Heart right ventricle (tissue), 16 donors: ENCODE measurements at regions of chr18 and their contacts with region 1.

Region 1: GRCh38 chr18:46821856-46822711 is 65.2 kb upstream of the ST8SIA5 start:
- DNase-seq: no peak
- ATAC-seq: no peak
- H3K4me3 ChIP-seq: no peak overlapping the region
- H3K27ac ChIP-seq: no peak overlapping the region
- H3K4me1 ChIP-seq: no peaks in the 10 kb centered on the region
- H3K27me3 ChIP-seq: no peaks in the 10 kb centered on the region
- CTCF ChIP-seq: no peak

Region 2: DNA sequence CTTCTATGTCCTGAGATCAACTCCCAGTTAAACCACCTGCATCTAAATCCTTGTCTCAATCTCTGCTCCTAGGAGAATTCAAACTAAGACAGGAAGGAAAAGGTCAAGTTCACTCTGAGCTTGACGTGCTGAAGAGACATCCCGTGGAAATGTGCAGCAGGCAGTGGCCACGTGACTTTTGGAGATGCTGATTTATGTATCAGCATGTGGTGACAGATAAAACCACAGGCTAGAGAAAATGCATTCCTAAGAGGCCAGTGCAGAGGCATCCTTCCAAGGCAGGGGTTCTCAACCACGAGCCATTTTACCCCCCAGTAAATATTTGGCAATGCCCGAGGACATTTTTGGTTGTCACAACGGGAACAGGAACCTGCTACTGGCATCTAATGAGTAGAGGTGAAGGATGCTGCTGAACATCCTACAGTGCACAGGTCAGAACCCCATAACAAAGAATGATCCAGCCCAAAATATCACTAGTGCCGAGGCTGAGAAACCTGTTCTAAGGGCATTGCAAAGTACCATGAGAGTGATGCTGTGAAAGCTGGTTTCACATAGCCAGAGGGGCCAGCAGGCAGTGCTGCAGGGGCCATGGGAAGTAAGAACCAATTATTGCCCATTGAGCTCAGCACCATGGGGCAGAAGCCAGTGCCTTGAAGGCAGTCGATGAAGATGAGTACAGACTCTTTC is 543.5 kb before region 1 on chr18:
- intact Hi-C with region 1: no loop called
- DNase-seq: no peak
- ATAC-seq: peak in 4 of 8 donors; percentile 23 to 50 (median 40)
- H3K4me3 ChIP-seq: no peak overlapping the region
- H3K27ac ChIP-seq: no peak overlapping the region
- H3K4me1 ChIP-seq: peaks cover 0 to 24% (median 17%) of the 10 kb centered on the region in 9 donors
- H3K27me3 ChIP-seq: no peaks in the 10 kb centered on the region
- CTCF ChIP-seq: no peak

Region 3: GRCh38 chr18:46411867-46412690 is 410.0 kb before region 1 on chr18:
- intact Hi-C with region 1: no loop called
- DNase-seq: peak; percentile 40 to 63
- ATAC-seq: peak; percentile 68 to 88 (median 82)
- H3K4me3 ChIP-seq: peak overlapping the region in 1 of 10 donors; percentile 9
- H3K27ac ChIP-seq: peak overlapping the region; percentile 61 to 94 (median 86)
- H3K4me1 ChIP-seq: peaks cover 5 to 90% (median 55%) of the 10 kb centered on the region in 9 donors
- H3K27me3 ChIP-seq: no peaks in the 10 kb centered on the region
- CTCF ChIP-seq: no peak

Region 4: DNA sequence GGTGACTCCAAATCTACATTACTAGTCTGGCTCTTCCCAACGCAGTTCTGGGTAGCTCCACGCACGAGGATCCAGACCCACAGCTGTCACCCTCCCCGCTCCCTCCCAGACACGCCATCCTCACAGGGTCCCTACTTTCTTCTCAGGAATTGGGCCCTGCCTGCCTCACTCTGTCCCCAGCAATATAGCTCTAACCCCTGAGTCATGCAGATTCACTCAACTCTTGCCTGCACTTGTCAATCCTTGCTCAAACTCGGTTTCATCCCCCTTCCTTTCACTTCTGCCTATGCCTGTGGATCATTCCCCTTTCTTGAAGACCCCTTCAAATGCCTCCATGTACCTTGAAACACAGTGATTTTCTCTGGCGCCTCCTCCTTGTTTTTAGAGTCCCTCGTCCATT is 70.2 kb before region 1 on chr18:
- intact Hi-C with region 1: no loop called
- DNase-seq: no peak
- ATAC-seq: no peak
- H3K4me3 ChIP-seq: no peak overlapping the region
- H3K27ac ChIP-seq: no peak overlapping the region
- H3K4me1 ChIP-seq: peaks cover 0 to 26% (median 10%) of the 10 kb centered on the region in 9 donors
- H3K27me3 ChIP-seq: peaks cover 0 to 28% (median 19%) of the 10 kb centered on the region in 7 donors
- CTCF ChIP-seq: no peak

Region 5: GRCh38 chr18:46768166-46768921 is 53.7 kb before region 1 on chr18:
- intact Hi-C with region 1: loop called in 1 of 10 experiments (anchors 2 kb)
- DNase-seq: peak; percentile 36 to 66
- ATAC-seq: peak; percentile 80 to 98 (median 90)
- H3K4me3 ChIP-seq: no peak overlapping the region
- H3K27ac ChIP-seq: peak overlapping the region in 7 of 10 donors; percentile 54 to 89 (median 87)
- H3K4me1 ChIP-seq: peaks cover 0 to 25% (median 13%) of the 10 kb centered on the region in 9 donors
- H3K27me3 ChIP-seq: no peaks in the 10 kb centered on the region
- CTCF ChIP-seq: no peak